Kidney (tissue), 22 donors: ENCODE measurements at regions of chr3 and their contacts with region 1.

Region 1: DNA sequence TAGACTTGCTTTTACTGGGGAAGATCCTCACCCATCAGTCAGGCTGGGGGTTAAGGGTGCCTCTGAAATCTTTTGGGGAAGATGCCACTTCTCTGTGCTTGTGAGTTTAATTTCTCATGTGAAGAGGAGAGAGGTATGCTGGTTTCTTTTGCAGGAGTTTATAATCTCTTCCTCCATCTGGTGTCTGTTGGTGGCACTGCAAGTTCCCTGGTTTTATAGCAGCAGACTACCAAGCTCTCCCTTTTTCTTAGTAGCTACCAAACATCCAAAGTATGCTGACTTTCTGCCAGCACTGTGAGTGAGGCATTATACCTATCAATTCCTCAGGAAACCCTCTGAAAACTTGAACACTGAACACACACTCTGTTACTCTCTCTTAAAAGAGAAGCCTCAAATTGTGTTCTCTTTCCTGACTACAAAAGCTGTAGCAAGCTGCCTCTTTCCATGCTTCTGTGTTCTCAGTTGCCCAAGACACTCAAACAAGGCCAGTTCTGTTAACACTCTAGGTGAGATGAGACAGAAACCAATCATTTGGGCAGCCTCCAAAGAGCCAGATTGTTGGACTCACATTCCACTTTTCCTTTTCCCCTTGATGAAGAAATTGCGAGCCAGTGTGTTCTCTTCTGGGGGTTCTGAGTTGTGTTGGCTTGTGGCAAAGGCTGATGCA is 299.5 kb downstream of the GAP43 start:
- DNase-seq: peak in 3 of 5 donors; percentile 14 to 26 (median 19)
- H3K4me3 ChIP-seq: no peak overlapping the region
- H3K27ac ChIP-seq: no peak overlapping the region
- H3K4me1 ChIP-seq: no peaks in the 10 kb centered on the region
- H3K27me3 ChIP-seq: no peaks in the 10 kb centered on the region
- CTCF ChIP-seq: peak; percentile 28

Region 2: GRCh38 chr3:116000311-116000710 is 77.5 kb after region 1 on chr3:
- intact Hi-C with region 1: no loop called
- DNase-seq: peak in 4 of 5 donors; percentile 19 to 49 (median 35)
- H3K4me3 ChIP-seq: no peak overlapping the region
- H3K27ac ChIP-seq: no peak overlapping the region
- H3K4me1 ChIP-seq: no peaks in the 10 kb centered on the region
- H3K27me3 ChIP-seq: no peaks in the 10 kb centered on the region
- CTCF ChIP-seq: no peak

Region 3: GRCh38 chr3:116849261-116849688 is 926.5 kb after region 1 on chr3:
- intact Hi-C with region 1: loop called (anchors 10 kb)
- DNase-seq: no peak
- H3K4me3 ChIP-seq: no peak overlapping the region
- H3K27ac ChIP-seq: no peak overlapping the region
- H3K4me1 ChIP-seq: no peaks in the 10 kb centered on the region
- H3K27me3 ChIP-seq: no peaks in the 10 kb centered on the region
- CTCF ChIP-seq: no peak